OCI-LY7 (cell line): ENCODE measurements at regions of chr4 and their contacts with region 1.

Region 1: DNA sequence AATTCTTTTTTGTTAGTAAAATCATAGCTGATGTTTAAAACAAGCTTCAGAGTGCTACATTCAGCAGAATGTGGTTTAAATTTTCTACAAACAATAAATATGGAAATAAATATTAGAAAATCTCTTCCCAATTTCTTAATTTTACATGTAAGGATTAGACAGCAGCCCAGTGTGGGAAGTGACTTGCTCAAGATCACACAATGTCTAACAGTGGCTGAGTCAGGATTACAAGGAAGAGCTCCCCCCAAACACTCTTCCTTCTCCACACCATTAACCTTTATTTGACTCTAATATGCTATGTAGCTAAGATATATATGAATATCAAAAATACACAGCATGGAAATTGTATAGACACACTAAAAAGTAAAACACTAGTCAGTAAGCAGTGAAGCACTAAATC is 59.5 kb downstream of the SLC10A7 start:
- DNase-seq: no peak
- H3K4me3 ChIP-seq: no peak overlapping the region
- H3K27ac ChIP-seq: no peak overlapping the region
- H3K4me1 ChIP-seq: peaks cover 6% of the 10 kb centered on the region
- CTCF ChIP-seq: no peak

Region 2: GRCh38 chr4:146222313-146222712 is 239.9 kb before region 1 on chr4:
- CTCF ChIA-PET with region 1: no interaction called
- POLR2A ChIA-PET with region 1: no interaction called
- intact Hi-C with region 1: no loop called
- DNase-seq: no peak
- H3K4me3 ChIP-seq: no peak overlapping the region
- H3K27ac ChIP-seq: no peak overlapping the region
- H3K4me1 ChIP-seq: peaks cover 6% of the 10 kb centered on the region
- CTCF ChIP-seq: no peak

Region 3: DNA sequence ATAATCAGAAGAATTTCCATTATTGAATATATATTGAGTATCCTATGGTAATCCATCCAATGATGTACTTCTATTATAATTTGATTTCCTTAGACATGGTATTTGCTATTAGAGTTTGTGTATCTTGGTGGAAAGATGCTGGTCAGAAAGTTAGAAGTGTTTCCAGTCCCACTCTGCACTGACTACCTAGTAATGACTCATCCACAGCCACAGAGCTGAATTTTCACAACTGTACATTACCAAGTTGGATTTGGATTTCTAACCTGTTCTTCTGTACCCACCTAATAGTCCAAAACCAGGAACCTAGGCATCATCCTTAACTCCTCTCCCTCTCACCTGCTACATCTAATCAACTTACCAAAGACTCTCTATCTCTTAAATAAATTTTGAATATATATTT is 102.5 kb before region 1 on chr4:
- CTCF ChIA-PET with region 1: no interaction called
- POLR2A ChIA-PET with region 1: no interaction called
- intact Hi-C with region 1: no loop called
- DNase-seq: no peak
- H3K4me3 ChIP-seq: no peak overlapping the region
- H3K27ac ChIP-seq: no peak overlapping the region
- H3K4me1 ChIP-seq: no peaks in the 10 kb centered on the region
- CTCF ChIP-seq: no peak

Region 4: GRCh38 chr4:146398896-146399445 is 63.3 kb before region 1 on chr4:
- CTCF ChIA-PET with region 1: no interaction called
- POLR2A ChIA-PET with region 1: no interaction called
- intact Hi-C with region 1: no loop called
- DNase-seq: no peak
- H3K4me3 ChIP-seq: no peak overlapping the region
- H3K27ac ChIP-seq: no peak overlapping the region
- H3K4me1 ChIP-seq: no peaks in the 10 kb centered on the region
- CTCF ChIP-seq: no peak

Region 5: GRCh38 chr4:146472404-146472803 is 10.2 kb after region 1 on chr4:
- CTCF ChIA-PET with region 1: no interaction called
- POLR2A ChIA-PET with region 1: interaction called, 10 read pairs
- intact Hi-C with region 1: no loop called
- DNase-seq: no peak
- H3K4me3 ChIP-seq: no peak overlapping the region
- H3K27ac ChIP-seq: no peak overlapping the region
- H3K4me1 ChIP-seq: no peaks in the 10 kb centered on the region
- CTCF ChIP-seq: no peak